Dorsolateral prefrontal cortex (tissue), 120 donors: ENCODE measurements at regions of chr7 and their contacts with region 1.

Region 1: GRCh38 chr7:154996752-154997151 is 6.2 kb downstream of the PAXIP1 start:
- DNase-seq: no peak
- H3K4me3 ChIP-seq: no peak overlapping the region
- H3K27ac ChIP-seq: no peak overlapping the region
- H3K27me3 ChIP-seq: no peaks in the 10 kb centered on the region
- CTCF ChIP-seq: no peak

Region 2: DNA sequence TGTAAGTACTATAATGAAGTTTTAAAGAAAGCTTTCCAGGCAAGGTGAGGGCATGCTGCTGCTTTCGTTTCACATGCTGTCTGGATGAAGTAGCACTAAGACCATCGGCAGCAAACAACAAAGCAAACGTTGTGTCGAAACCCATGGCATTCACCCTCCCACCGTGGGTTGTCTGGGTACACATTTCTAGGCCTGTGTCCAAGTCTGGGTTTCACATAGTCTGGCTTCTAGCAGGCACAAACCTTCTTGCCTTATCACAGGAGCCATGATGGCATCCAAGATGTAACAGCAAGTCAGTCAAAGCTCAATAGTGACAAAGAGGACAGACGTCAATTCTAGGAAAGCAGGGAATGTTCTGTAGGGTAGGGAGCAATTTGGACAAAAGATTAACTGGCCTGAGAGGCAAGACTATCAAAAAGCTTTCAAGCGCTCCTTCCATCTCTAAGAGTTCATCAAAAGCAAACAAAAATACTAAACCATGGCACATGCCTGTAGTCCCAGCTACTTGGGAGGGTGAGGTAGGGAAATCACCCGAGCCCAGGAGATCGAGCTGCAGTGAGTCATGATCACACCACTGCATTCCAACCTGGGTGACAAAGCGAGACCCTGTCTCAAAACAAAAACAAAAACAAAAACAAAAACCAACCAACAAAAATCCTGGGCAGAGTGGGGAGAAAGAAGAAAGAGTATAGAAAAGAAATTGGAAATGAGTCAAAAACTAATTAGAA is 36.5 kb before region 1 on chr7:
- intact Hi-C with region 1: loop called in 1 of 2 experiments (anchors 5 kb)
- DNase-seq: peak in 3 of 10 donors; percentile 24 to 64 (median 50)
- H3K4me3 ChIP-seq: peak overlapping the region in 1 of 59 donors; percentile 18
- H3K27ac ChIP-seq: peak overlapping the region in 6 of 59 donors; percentile 3 to 42 (median 16)
- H3K27me3 ChIP-seq: no peaks in the 10 kb centered on the region
- CTCF ChIP-seq: no peak